ENCODE measurements at regions of chr19 and their contacts with region 1.

Region 1: DNA sequence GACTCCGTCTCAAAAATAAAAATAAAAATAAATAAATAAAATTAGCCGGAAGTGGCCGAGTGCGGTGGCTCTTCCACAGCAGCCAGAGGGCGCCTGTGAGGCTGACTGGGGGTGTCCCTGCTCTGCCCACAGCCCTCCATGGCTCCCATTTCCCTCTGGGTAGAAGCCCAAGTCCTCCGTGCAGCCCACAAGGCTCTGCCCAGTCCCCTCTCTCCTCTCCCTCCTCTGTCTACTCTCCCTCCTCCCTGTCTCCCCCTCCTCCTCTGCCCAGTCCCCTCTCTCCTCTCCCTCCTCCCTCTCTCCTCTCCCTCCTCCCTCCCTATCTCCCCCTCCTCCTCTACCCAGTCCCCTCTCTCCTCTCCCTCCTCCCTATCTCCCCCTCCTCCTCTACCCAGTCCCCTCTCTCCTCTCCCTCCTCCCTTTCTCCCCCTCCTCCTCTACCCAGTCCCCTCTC is 20.4 kb downstream of the MISP start:
- DNase-seq: peak in 1 of 7 donors; percentile 52
- H3K4me3 ChIP-seq: no peak overlapping the region
- H3K27ac ChIP-seq: no peak overlapping the region
- H3K4me1 ChIP-seq: no peaks in the 10 kb centered on the region
- H3K27me3 ChIP-seq: no peaks in the 10 kb centered on the region
- CTCF ChIP-seq: peak; percentile 18 to 54 (median 48)
- POLR2A ChIP-seq: no peak

Region 2: DNA sequence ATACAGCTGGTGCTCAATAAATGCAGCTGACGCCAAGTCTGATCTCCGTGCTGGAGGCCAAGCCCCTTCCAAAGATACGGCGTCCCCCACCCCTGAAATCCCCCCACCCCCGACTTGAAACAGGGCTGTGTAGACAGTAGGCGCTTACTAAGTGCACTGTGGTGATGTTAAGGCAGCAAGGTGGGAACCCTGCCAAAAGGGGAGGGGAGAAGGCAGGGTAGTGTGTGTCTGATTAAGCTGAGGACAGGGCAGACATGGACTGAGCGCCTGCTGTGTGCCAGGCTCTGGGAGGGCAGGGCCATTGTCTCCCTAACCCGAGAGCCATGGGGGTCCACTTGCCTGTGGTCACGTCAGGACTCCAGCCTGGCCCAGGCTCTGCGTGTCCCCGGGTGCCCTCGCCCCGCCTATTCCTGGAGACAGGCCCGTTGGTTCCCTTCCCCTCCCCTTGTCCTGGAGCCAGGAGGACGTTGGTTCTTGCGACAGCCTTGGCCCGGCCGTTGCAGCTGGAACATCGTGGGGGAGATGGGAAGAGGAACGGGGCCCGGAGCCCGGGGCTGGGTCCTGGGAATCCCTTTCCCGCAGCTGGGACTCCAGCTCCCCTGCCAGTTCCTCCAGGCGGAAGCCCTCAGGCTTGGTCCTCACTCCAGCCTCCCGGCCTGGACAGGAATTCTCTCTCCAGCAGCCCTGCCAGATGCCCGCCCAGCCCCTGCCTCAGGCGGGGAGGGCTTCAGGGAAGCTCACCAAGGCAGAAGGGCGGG is 79.0 kb after region 1 on chr19:
- intact Hi-C with region 1: loop called in 1 of 2 experiments (anchors 10 kb)
- DNase-seq: peak; percentile 88 to 98 (median 96)
- H3K4me3 ChIP-seq: peak overlapping the region in 1 of 4 donors; percentile 21
- H3K27ac ChIP-seq: peak overlapping the region; percentile 21 to 92 (median 65)
- H3K4me1 ChIP-seq: peaks cover 0 to 10% of the 10 kb centered on the region in 2 donors
- H3K27me3 ChIP-seq: peaks cover 14% of the 10 kb centered on the region
- CTCF ChIP-seq: no peak
- POLR2A ChIP-seq: peak in 1 of 2 donors; percentile 35

Region 3: GRCh38 chr19:917323-918151 is 146.2 kb after region 1 on chr19 and contains the start of gene KISS1R:
- intact Hi-C with region 1: loop called (anchors 2 to 5 kb)
- DNase-seq: peak in 1 of 7 donors; percentile 33
- H3K4me3 ChIP-seq: peak within 1 kb of the TSS in 1 of 4 donors; percentile 42
- H3K27ac ChIP-seq: no peak within 1 kb of the TSS
- H3K4me1 ChIP-seq: peaks cover 9 to 30% of the 10 kb centered on the region in 2 donors
- H3K27me3 ChIP-seq: peaks cover 42% of the 10 kb centered on the region
- CTCF ChIP-seq: peak in 3 of 6 experiments; percentile 24 to 35 (median 33)
- POLR2A ChIP-seq: no peak
- total RNA-seq, gene KISS1R: 0.25 to 0.44 TPM in 2 of 9 donors, not detected in the others

Region 4: DNA sequence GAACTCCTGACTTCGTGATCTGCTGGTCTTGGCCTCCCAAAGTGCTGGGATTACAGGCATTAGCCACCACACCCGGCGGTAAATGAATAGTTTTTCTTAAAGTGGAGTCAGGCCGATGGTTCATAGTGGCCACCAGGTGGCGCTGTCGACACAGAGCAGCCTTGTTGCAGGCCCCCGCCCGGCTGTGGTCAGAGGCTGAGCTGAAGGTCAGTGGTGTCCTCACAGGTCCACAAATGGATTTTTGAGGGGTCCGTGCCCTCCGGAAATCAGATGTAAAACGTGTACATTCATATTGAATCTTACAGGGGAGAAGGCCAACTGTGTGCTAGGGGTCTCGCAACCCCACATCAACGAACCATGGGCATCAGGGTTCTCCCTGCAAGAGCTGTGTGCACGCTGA is 199.3 kb after region 1 on chr19:
- intact Hi-C with region 1: loop called in 1 of 2 experiments (anchors 10 kb)
- DNase-seq: no peak
- H3K4me3 ChIP-seq: no peak overlapping the region
- H3K27ac ChIP-seq: no peak overlapping the region
- H3K4me1 ChIP-seq: no peaks in the 10 kb centered on the region
- H3K27me3 ChIP-seq: no peaks in the 10 kb centered on the region
- CTCF ChIP-seq: peak in 4 of 6 experiments; percentile 42 to 49 (median 48)
- POLR2A ChIP-seq: no peak

Region 5: DNA sequence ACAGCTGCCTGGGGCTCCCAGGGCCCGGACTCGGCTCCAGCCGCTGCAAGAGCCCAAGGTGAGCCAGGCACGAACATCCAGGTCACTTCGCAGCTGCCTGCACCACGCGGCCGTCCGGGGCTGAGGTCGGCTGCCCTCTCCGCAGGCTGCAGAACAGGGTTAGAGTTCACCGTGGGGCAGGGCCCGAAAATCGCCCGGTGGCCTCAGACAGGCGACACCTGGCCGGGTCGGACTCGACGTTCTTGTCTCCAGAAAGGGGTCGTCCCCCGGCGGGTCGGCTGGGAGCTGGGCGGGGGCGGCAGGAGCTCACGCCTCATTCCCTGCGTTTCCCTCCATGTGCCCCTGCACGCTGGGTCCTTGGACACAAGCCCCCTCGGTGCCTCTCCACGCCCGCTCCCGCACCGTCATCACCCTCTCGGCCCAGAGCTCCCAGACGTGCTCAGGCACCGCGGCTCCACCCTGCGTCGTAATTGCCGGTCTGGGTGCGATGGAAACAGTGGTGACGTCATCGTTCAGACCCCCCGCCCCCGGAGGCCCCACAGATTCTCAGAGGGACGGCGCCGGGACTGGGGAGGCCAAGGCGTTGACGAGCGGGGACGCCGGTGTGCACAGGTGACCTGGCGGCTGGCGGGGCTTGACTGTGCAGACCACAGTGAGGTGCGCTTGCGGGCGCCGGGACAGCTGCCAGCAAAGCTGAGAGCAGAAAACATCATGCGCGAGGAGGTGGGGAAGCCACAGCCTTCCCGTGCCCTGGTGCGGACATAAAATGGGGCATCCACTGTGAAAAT is 224.9 kb after region 1 on chr19:
- intact Hi-C with region 1: loop called in 1 of 2 experiments (anchors 10 kb)
- DNase-seq: peak in 2 of 7 donors; percentile 51 to 88
- H3K4me3 ChIP-seq: no peak overlapping the region
- H3K27ac ChIP-seq: no peak overlapping the region
- H3K4me1 ChIP-seq: peaks cover 0 to 19% of the 10 kb centered on the region in 2 donors
- H3K27me3 ChIP-seq: peaks cover 38% of the 10 kb centered on the region
- CTCF ChIP-seq: no peak
- POLR2A ChIP-seq: no peak

Measured in adrenal gland (tissue), 19 donors.